PC-3 (cell line): ENCODE measurements at regions of chrX and their contacts with region 1.

Region 1: GRCh38 chrX:84907324-84907968 is 96.2 kb upstream of the APOOL start:
- DNase-seq: peak; percentile 36
- ATAC-seq: peak; percentile 81
- H3K4me3 ChIP-seq: peak overlapping the region; percentile 40; the same call in 1 of the 2 replicates
- H3K27ac ChIP-seq: no peak overlapping the region
- H3K4me1 ChIP-seq: 0 out of 2 replicates have a peak, but pooled peaks cover 4% of the 10 kb centered on the region
- H3K27me3 ChIP-seq: no peaks in the 10 kb centered on the region
- CTCF ChIP-seq: peak; percentile 59

Region 2: GRCh38 chrX:84339507-84340364 is 567.7 kb before region 1 on chrX:
- CTCF ChIA-PET with region 1: no interaction called
- POLR2A ChIA-PET with region 1: no interaction called
- intact Hi-C with region 1: loop called (anchors 5 kb)
- DNase-seq: peak; percentile 54
- ATAC-seq: peak; percentile 31; the same call in 1 of the 2 replicates
- H3K4me3 ChIP-seq: no peak overlapping the region
- H3K27ac ChIP-seq: no peak overlapping the region
- H3K4me1 ChIP-seq: no peaks in the 10 kb centered on the region
- H3K27me3 ChIP-seq: no peaks in the 10 kb centered on the region
- CTCF ChIP-seq: peak; percentile 72

Region 3: DNA sequence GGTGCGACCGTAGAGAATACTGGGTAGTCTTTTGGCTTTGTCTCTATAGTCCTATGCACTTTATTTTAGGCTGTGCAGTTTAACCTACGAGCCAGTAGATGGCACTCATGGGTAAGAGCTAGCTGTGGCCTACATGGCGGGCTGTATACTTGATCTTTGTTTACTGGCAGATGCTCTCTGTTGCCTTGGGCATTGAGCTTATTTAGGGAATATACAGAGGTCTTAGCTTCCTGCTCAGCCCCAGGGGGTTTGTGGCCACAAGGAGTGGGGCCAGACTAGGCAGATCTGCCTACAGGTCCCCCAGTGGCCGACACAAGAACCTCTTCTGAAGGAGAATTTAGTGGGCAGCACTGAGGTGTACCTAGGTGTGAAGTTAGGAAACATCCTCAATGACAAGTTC is 177.6 kb before region 1 on chrX:
- CTCF ChIA-PET with region 1: interaction called, 9 read pairs
- POLR2A ChIA-PET with region 1: no interaction called
- intact Hi-C with region 1: loop called (anchors 1 kb)
- DNase-seq: peak; percentile 42
- ATAC-seq: peak; percentile 97
- H3K4me3 ChIP-seq: no peak overlapping the region
- H3K27ac ChIP-seq: no peak overlapping the region
- H3K4me1 ChIP-seq: no peaks in the 10 kb centered on the region
- H3K27me3 ChIP-seq: no peaks in the 10 kb centered on the region
- CTCF ChIP-seq: peak; percentile 85

Region 4: DNA sequence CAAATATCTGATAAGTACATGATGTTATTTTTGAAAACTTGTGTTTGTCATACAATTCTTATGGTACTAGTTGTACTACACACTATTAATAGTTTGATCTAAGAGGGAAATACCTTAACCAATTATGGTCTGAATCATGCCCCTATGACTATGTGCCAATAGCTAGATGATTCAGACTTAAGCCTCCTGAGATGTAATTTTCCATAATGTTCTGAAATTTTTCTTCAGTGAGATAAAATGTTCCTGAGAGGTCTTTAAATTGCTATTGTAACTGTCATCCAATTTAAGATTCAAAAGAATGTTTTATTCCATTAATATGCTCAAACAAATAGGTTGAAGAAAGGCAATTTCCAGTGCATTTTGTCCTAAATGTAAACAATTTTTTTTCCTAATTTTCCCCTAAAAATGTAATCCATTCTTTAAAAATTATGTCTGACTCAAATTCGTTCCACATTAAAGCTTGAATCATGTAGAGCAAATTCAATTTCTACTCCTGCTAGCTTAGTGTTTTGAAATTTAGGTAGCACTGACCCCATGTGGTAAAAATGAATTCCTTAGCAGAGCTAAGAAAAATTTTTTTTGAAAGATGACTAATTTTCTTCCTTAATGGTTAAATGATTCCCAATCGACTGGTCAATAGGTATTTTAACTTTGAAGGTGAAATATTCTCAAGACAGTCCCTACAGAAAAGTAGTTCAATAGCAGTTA is 145.3 kb after region 1 on chrX:
- CTCF ChIA-PET with region 1: no interaction called
- POLR2A ChIA-PET with region 1: no interaction called
- intact Hi-C with region 1: loop called (anchors 1 kb)
- DNase-seq: peak; percentile 68
- ATAC-seq: peak; percentile 76
- H3K4me3 ChIP-seq: no peak overlapping the region
- H3K27ac ChIP-seq: peak overlapping the region; percentile 65
- H3K4me1 ChIP-seq: peaks cover 15% of the 10 kb centered on the region
- H3K27me3 ChIP-seq: no peaks in the 10 kb centered on the region
- CTCF ChIP-seq: peak; percentile 52

Region 5: GRCh38 chrX:85084770-85085393 is 177.4 kb after region 1 on chrX:
- CTCF ChIA-PET with region 1: no interaction called
- POLR2A ChIA-PET with region 1: no interaction called
- intact Hi-C with region 1: no loop called
- DNase-seq: peak; percentile 55
- ATAC-seq: no peak
- H3K4me3 ChIP-seq: no peak overlapping the region
- H3K27ac ChIP-seq: no peak overlapping the region
- H3K4me1 ChIP-seq: no peaks in the 10 kb centered on the region
- H3K27me3 ChIP-seq: no peaks in the 10 kb centered on the region
- CTCF ChIP-seq: peak; percentile 73

Region 6: DNA sequence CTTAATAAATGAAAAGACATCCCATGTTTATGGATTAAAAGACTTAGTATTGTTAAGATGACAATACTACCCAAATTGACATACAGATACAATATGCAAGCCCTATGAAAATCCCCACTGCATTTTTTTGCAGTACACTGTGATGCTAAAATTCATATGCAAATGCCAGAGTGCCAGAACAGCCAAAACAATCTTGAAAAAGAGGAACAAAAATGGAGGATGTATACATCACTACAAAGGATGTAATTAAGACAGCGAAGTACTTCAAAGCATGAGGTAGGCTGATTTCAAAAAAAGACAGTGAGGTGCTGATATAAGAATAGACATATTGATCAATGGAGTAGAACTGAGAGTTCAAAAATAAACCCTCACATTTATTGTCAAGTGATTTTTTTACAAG is 288.9 kb after region 1 on chrX:
- CTCF ChIA-PET with region 1: no interaction called
- POLR2A ChIA-PET with region 1: no interaction called
- intact Hi-C with region 1: no loop called
- DNase-seq: no peak
- ATAC-seq: no peak
- H3K4me3 ChIP-seq: no peak overlapping the region
- H3K27ac ChIP-seq: no peak overlapping the region
- H3K4me1 ChIP-seq: no peaks in the 10 kb centered on the region
- H3K27me3 ChIP-seq: no peaks in the 10 kb centered on the region
- CTCF ChIP-seq: no peak